ENCODE measurements at regions of chr3 and their contacts with region 1.

Region 1: GRCh38 chr3:125310623-125311081 is 64.5 kb downstream of the ZNF148 start:
- DNase-seq: peak; percentile 47
- H3K4me3 Mint-ChIP-seq: peak overlapping the region; percentile 79
- H3K27ac Mint-ChIP-seq: peak overlapping the region; percentile 79
- H3K4me1 Mint-ChIP-seq: peaks cover 38% of the 10 kb centered on the region
- H3K27me3 Mint-ChIP-seq: no peaks in the 10 kb centered on the region

Region 2: GRCh38 chr3:124492811-124493210 is 817.8 kb before region 1 on chr3:
- intact Hi-C with region 1: no loop called
- DNase-seq: no peak
- H3K4me3 Mint-ChIP-seq: no peak overlapping the region
- H3K27ac Mint-ChIP-seq: no peak overlapping the region
- H3K4me1 Mint-ChIP-seq: peaks cover 8% of the 10 kb centered on the region
- H3K27me3 Mint-ChIP-seq: peaks cover 10% of the 10 kb centered on the region

Region 3: DNA sequence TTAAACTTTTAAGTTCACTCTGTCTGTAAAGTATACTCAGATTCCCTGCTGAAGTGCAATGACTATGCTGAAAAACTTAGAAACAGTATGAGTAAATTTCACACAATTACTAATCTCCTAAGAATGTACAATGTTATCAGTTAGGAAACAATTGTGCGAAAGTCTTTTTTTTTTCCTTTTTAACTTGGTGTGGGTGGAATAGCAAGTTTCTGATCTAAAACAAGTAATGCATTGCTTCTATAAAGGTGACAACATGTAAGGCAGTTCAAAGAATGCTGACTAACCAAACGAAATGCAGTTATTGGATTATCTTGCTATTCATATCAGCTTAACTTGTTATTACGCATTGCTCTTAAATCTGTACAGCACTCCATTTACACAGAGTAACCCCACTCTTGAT is 78.8 kb before region 1 on chr3:
- intact Hi-C with region 1: loop called (anchors 5 kb)
- DNase-seq: no peak
- H3K4me3 Mint-ChIP-seq: no peak overlapping the region
- H3K27ac Mint-ChIP-seq: peak overlapping the region; percentile 58
- H3K4me1 Mint-ChIP-seq: peaks cover 23% of the 10 kb centered on the region
- H3K27me3 Mint-ChIP-seq: no peaks in the 10 kb centered on the region

Region 4: DNA sequence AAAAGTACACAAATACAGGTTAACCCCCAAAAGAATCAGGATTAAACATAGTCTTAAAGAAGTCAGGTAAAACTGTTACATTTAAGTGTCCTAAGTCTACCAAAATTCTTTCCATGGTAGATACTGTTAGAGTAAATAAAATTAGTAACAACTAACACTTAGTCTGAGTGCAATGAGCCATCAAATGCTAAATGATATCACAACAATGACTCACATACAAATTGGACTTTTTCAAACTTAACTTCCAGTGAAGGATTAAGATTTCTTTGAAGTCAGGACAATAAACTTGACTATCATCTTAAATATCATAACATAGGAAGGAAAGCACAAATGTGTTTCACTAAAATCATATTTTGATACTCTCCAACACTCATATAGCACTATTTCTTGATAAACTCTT is 20.6 kb after region 1 on chr3:
- intact Hi-C with region 1: no loop called
- DNase-seq: no peak
- H3K4me3 Mint-ChIP-seq: no peak overlapping the region
- H3K27ac Mint-ChIP-seq: no peak overlapping the region
- H3K4me1 Mint-ChIP-seq: peaks cover 19% of the 10 kb centered on the region
- H3K27me3 Mint-ChIP-seq: no peaks in the 10 kb centered on the region

Region 5: DNA sequence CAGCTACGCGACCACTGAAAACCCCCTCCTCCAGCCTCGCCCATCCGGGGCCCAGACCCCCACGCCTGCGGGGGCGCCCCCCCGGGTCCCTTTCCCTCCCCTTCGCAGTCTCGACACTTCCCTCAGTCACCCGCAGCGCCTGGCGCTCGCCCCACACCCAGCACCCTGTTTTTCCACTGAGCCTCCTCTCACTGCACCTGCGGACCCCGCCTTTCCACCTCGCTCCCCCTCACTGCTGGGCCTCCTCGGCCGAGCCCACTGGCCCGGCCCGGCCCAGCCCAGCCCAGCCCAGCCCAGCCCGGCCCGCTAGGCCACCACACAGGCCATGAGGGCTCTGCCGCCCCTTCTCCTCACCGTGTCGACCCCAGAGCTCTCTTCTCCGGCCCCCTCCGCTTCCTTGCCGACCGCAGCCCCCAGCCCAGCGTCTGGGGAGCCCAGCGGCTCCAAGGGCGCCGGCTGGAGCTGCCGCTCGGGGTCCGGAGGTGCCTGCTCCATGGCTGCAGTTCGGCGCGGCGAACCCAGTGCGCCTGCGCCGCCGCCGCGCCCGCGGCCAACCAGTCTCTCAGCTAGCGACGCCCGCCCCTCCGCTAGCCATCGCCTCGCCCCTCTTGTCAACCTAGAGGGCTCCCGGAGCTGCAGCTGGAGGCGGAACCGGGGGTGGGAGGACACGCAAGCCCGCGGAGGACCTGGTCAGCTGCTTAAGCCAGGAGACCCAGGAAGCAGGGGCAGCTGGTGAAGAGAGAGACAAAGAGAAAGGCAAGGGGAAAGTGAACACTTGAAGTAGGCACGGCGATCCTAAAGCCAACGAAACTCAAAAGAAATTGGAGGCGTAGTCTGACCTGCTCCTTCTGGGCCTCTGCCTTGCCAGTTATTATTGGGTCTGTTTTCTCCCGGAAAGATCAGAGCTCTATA is 209.3 kb after region 1 on chr3 and contains the start of gene SNX4:
- intact Hi-C with region 1: loop called (anchors 5 kb)
- DNase-seq: peak; percentile 85
- H3K4me3 Mint-ChIP-seq: peak within 1 kb of the TSS; percentile 98
- H3K27ac Mint-ChIP-seq: peak within 1 kb of the TSS; percentile 74
- H3K4me1 Mint-ChIP-seq: peaks cover 28% of the 10 kb centered on the region
- H3K27me3 Mint-ChIP-seq: no peaks in the 10 kb centered on the region
- total RNA-seq, gene SNX4: 40.7 and 44.4 TPM in 2 replicates